ENCODE measurements at regions of chr1 and their contacts with region 1.

Region 1: GRCh38 chr1:62841587-62842169 is 57.7 kb downstream of the ATG4C start:
- DNase-seq: no peak
- ATAC-seq: peak; percentile 49
- H3K4me3 Mint-ChIP-seq: no peak overlapping the region
- H3K27ac Mint-ChIP-seq: no peak overlapping the region
- H3K4me1 Mint-ChIP-seq: peaks cover 3% of the 10 kb centered on the region
- H3K27me3 Mint-ChIP-seq: no peaks in the 10 kb centered on the region
- CTCF ChIP-seq: peak; percentile 31

Region 2: GRCh38 chr1:62508187-62508758 is 333.4 kb before region 1 on chr1:
- CTCF ChIA-PET with region 1: interaction called, 5 read pairs
- POLR2A ChIA-PET with region 1: no interaction called
- intact Hi-C with region 1: loop called (anchors 5 kb)
- DNase-seq: no peak
- ATAC-seq: no peak
- H3K4me3 Mint-ChIP-seq: no peak overlapping the region
- H3K27ac Mint-ChIP-seq: no peak overlapping the region
- H3K4me1 Mint-ChIP-seq: no peaks in the 10 kb centered on the region
- H3K27me3 Mint-ChIP-seq: no peaks in the 10 kb centered on the region
- CTCF ChIP-seq: peak; percentile 59

Region 3: GRCh38 chr1:62735491-62736171 is 106.0 kb before region 1 on chr1:
- CTCF ChIA-PET with region 1: no interaction called
- POLR2A ChIA-PET with region 1: no interaction called
- intact Hi-C with region 1: no loop called
- DNase-seq: no peak
- ATAC-seq: no peak
- H3K4me3 Mint-ChIP-seq: no peak overlapping the region
- H3K27ac Mint-ChIP-seq: no peak overlapping the region
- H3K4me1 Mint-ChIP-seq: no peaks in the 10 kb centered on the region
- H3K27me3 Mint-ChIP-seq: no peaks in the 10 kb centered on the region
- CTCF ChIP-seq: no peak

Region 4: GRCh38 chr1:62800825-62801306 is 40.8 kb before region 1 on chr1:
- CTCF ChIA-PET with region 1: interaction called, 5 read pairs
- POLR2A ChIA-PET with region 1: interaction called, 3 read pairs
- intact Hi-C with region 1: loop called (anchors 5 kb)
- DNase-seq: no peak
- ATAC-seq: peak; percentile 98
- H3K4me3 Mint-ChIP-seq: peak overlapping the region; percentile 78
- H3K27ac Mint-ChIP-seq: peak overlapping the region; percentile 95
- H3K4me1 Mint-ChIP-seq: peaks cover 61% of the 10 kb centered on the region
- H3K27me3 Mint-ChIP-seq: no peaks in the 10 kb centered on the region
- CTCF ChIP-seq: no peak

Region 5: GRCh38 chr1:63148825-63149645 is 307.4 kb after region 1 on chr1:
- CTCF ChIA-PET with region 1: interaction called, 6 read pairs
- POLR2A ChIA-PET with region 1: no interaction called
- intact Hi-C with region 1: loop called (anchors 2 kb)
- DNase-seq: no peak
- ATAC-seq: no peak
- H3K4me3 Mint-ChIP-seq: no peak overlapping the region
- H3K27ac Mint-ChIP-seq: no peak overlapping the region
- H3K4me1 Mint-ChIP-seq: no peaks in the 10 kb centered on the region
- H3K27me3 Mint-ChIP-seq: peaks cover 7% of the 10 kb centered on the region
- CTCF ChIP-seq: no peak

Region 6: DNA sequence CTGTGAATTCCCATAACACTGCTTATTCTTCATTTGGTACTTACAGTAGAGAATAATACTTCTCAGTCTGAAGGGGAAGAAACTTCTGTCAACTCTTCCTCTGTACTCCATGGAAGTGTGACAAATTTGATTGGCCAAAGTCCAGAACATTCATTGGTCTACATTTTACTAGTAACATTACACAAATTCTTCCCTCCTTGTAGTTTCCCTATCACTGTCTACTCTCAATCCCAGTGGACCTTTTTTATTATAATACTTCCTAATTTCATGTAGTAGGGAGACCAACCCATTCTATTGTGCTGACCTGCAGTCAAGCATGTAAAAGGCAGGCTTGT is 600.4 kb after region 1 on chr1:
- CTCF ChIA-PET with region 1: interaction called, 3 read pairs
- POLR2A ChIA-PET with region 1: no interaction called
- intact Hi-C with region 1: loop called (anchors 1 kb)
- DNase-seq: no peak
- ATAC-seq: no peak
- H3K4me3 Mint-ChIP-seq: no peak overlapping the region
- H3K27ac Mint-ChIP-seq: no peak overlapping the region
- H3K4me1 Mint-ChIP-seq: peaks cover 7% of the 10 kb centered on the region
- H3K27me3 Mint-ChIP-seq: no peaks in the 10 kb centered on the region
- CTCF ChIP-seq: no peak

Region 7: GRCh38 chr1:63537940-63538339 is 696.3 kb after region 1 on chr1:
- CTCF ChIA-PET with region 1: interaction called, 7 read pairs
- POLR2A ChIA-PET with region 1: no interaction called
- intact Hi-C with region 1: loop called (anchors 1 kb)
- DNase-seq: no peak
- ATAC-seq: no peak
- H3K4me3 Mint-ChIP-seq: no peak overlapping the region
- H3K27ac Mint-ChIP-seq: no peak overlapping the region
- H3K4me1 Mint-ChIP-seq: no peaks in the 10 kb centered on the region
- H3K27me3 Mint-ChIP-seq: no peaks in the 10 kb centered on the region
- CTCF ChIP-seq: no peak

Measured in activated B cell treated with CpG ODN at 0.5 μM for 24 hours (primary cell).